ENCODE measurements at regions of chr19 and their contacts with region 1.

Region 1: GRCh38 chr19:860481-861101 is 1.1 kb downstream of the CFD start:
- DNase-seq: no peak
- ATAC-seq: peak; percentile 46
- H3K4me3 ChIP-seq: no peak overlapping the region
- H3K27ac ChIP-seq: no peak overlapping the region
- H3K4me1 ChIP-seq: peaks cover 10% of the 10 kb centered on the region
- H3K27me3 ChIP-seq: no peaks in the 10 kb centered on the region; a peak in 1 of 4 replicates
- CTCF ChIP-seq: peak in 2 of 3 experiments; percentile 6 to 10; a peak in 2 of 6 replicates
- EP300 ChIP-seq: no peak
- POLR2A ChIP-seq: peak; percentile 64; the same call in 1 of the 2 replicates
- RAD21 ChIP-seq: no peak

Region 2: GRCh38 chr19:771332-771785 is 89.2 kb before region 1 on chr19:
- CTCF ChIA-PET with region 1: interaction called, 14 read pairs
- POLR2A ChIA-PET with region 1: no interaction called
- RAD21 ChIA-PET with region 1: interaction called, 10 read pairs
- SMC1A ChIA-PET with region 1: interaction called, 6 read pairs
- in situ Hi-C with region 1: no loop called
- intact Hi-C with region 1: loop called (anchors 2 kb)
- DNase-seq: no peak
- ATAC-seq: peak; percentile 77
- H3K4me3 ChIP-seq: no peak overlapping the region
- H3K27ac ChIP-seq: no peak overlapping the region
- H3K4me1 ChIP-seq: no peaks in the 10 kb centered on the region
- H3K27me3 ChIP-seq: no peaks in the 10 kb centered on the region
- CTCF ChIP-seq: peak; percentile 39 to 57 (median 40); a peak in 5 of 6 replicates
- EP300 ChIP-seq: no peak
- POLR2A ChIP-seq: no peak
- RAD21 ChIP-seq: no peak

Region 3: GRCh38 chr19:804421-805165 is 56.0 kb before region 1 on chr19:
- CTCF ChIA-PET with region 1: no interaction called
- POLR2A ChIA-PET with region 1: no interaction called
- RAD21 ChIA-PET with region 1: no interaction called
- SMC1A ChIA-PET with region 1: no interaction called
- in situ Hi-C with region 1: no loop called
- intact Hi-C with region 1: no loop called
- DNase-seq: no peak
- ATAC-seq: no peak
- H3K4me3 ChIP-seq: no peak overlapping the region
- H3K27ac ChIP-seq: no peak overlapping the region
- H3K4me1 ChIP-seq: peaks cover 7% of the 10 kb centered on the region; the same call in 1 of the 2 replicates
- H3K27me3 ChIP-seq: no peaks in the 10 kb centered on the region
- CTCF ChIP-seq: no peak
- EP300 ChIP-seq: no peak
- POLR2A ChIP-seq: no peak; the same call in 1 of the 2 replicates
- RAD21 ChIP-seq: no peak

Region 4: DNA sequence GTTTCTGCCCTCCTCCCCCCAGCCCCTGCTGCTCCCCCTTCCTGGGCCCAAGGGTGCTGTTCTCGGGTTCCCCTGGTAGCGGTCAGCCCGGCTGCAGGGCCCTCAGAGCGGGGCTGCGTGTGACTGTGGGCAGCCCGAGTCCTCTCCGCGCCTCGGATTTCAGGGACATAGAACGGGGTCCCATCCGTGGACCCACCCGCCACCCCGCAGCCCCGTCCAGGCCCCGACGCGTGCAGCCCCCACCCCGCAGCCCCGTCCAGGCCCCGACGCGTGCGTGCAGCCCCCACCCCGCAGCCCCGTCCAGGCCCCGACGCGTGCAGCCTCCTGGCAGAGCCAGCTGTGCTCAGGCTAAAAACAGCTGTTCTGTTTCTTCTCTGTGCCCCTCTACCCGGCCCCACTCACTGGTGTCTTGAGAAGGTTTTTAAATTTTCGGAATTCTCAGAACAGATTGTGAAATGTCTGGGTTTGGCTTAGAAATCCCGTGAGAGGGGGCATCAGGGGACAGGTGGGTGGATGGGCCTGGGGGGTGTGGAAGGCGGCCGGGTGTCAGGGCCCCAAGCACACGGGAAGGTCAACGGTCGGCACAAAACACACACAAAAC is 25.3 kb before region 1 on chr19:
- CTCF ChIA-PET with region 1: no interaction called
- POLR2A ChIA-PET with region 1: no interaction called
- RAD21 ChIA-PET with region 1: no interaction called
- SMC1A ChIA-PET with region 1: no interaction called
- in situ Hi-C with region 1: no loop called
- intact Hi-C with region 1: no loop called
- DNase-seq: no peak
- ATAC-seq: no peak
- H3K4me3 ChIP-seq: no peak overlapping the region
- H3K27ac ChIP-seq: no peak overlapping the region
- H3K4me1 ChIP-seq: no peaks in the 10 kb centered on the region
- H3K27me3 ChIP-seq: no peaks in the 10 kb centered on the region
- CTCF ChIP-seq: no peak
- EP300 ChIP-seq: no peak
- POLR2A ChIP-seq: no peak
- RAD21 ChIP-seq: no peak

Region 5: GRCh38 chr19:907183-907853 is 46.7 kb after region 1 on chr19:
- CTCF ChIA-PET with region 1: interaction called, 40 read pairs
- POLR2A ChIA-PET with region 1: interaction called, 3 read pairs
- RAD21 ChIA-PET with region 1: interaction called, 30 read pairs
- SMC1A ChIA-PET with region 1: interaction called, 12 read pairs
- in situ Hi-C with region 1: no loop called
- intact Hi-C with region 1: no loop called
- DNase-seq: no peak
- ATAC-seq: peak; percentile 67
- H3K4me3 ChIP-seq: no peak overlapping the region
- H3K27ac ChIP-seq: peak overlapping the region; percentile 56; the same call in 1 of the 2 replicates
- H3K4me1 ChIP-seq: peaks cover 40% of the 10 kb centered on the region
- H3K27me3 ChIP-seq: no peaks in the 10 kb centered on the region
- CTCF ChIP-seq: no peak
- EP300 ChIP-seq: no peak
- POLR2A ChIP-seq: no peak
- RAD21 ChIP-seq: no peak

Region 6: DNA sequence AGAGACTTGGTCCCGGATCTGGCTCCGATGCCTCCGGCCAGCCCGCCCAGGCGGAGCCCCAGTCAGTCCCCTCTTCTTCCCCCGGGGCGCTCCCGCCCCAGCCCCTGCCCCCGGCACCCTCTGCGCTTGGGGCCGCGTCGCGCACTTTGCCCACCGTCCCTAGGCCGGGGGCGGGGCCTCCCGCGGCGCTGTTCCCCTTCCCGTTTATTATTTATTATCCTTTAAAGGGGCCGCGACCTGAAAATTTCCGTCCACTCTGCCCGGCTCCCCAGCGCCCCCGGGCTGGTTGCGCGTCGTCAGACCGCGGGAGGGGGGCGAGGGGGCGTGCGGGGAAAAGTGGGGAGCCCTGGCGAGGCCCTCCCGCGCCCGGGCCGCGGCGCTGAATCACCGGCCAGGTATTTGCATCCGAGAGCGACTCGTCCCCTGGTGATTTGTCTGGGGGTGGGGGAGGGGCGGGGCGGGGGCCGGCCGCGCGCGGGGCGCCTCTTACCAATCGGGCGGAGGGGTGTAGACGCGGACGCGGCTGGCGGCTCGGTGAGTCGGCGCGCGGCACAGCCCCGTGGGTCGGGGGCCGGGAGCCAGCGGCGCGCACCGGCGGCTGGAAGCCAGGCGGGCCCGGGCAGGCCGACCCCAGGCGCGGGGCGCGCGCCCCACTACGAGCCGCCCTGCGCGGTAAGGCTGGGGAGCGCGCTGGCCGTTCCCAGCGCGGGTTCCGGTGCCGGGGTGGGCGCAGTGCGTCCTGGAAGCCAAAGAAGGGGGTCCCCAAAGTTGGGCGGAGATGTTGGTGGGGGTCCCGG is 65.1 kb after region 1 on chr19 and contains the start of gene ARID3A:
- CTCF ChIA-PET with region 1: interaction called, 50 read pairs
- POLR2A ChIA-PET with region 1: interaction called, 5 read pairs
- RAD21 ChIA-PET with region 1: interaction called, 46 read pairs
- SMC1A ChIA-PET with region 1: interaction called, 12 read pairs
- in situ Hi-C with region 1: loop called (anchors 5 kb)
- intact Hi-C with region 1: loop called (anchors 1 kb)
- DNase-seq: no peak
- ATAC-seq: peak; percentile 27
- H3K4me3 ChIP-seq: peak within 1 kb of the TSS; percentile 99
- H3K27ac ChIP-seq: peak within 1 kb of the TSS; percentile 96
- H3K4me1 ChIP-seq: peaks cover 18% of the 10 kb centered on the region
- H3K27me3 ChIP-seq: no peaks in the 10 kb centered on the region
- CTCF ChIP-seq: no peak
- EP300 ChIP-seq: no peak
- POLR2A ChIP-seq: peak; percentile 80
- RAD21 ChIP-seq: no peak; the same call in 1 of the 2 replicates
- polyA plus RNA-seq, gene ARID3A: 0.76 to 1.6 TPM

Region 7: GRCh38 chr19:989381-990119 is 129.0 kb after region 1 on chr19:
- CTCF ChIA-PET with region 1: interaction called, 30 read pairs
- POLR2A ChIA-PET with region 1: no interaction called
- RAD21 ChIA-PET with region 1: interaction called, 10 read pairs
- SMC1A ChIA-PET with region 1: interaction called, 15 read pairs
- in situ Hi-C with region 1: loop called (anchors 5 kb)
- intact Hi-C with region 1: loop called (anchors 2 kb)
- DNase-seq: no peak
- ATAC-seq: no peak
- H3K4me3 ChIP-seq: no peak overlapping the region
- H3K27ac ChIP-seq: no peak overlapping the region
- H3K4me1 ChIP-seq: 0 out of 2 replicates have a peak, but pooled peaks cover 3% of the 10 kb centered on the region
- H3K27me3 ChIP-seq: no peaks in the 10 kb centered on the region
- CTCF ChIP-seq: 0 out of 6 replicates have a peak, but pooled peaks have one; percentile 12 to 28 (median 13)
- EP300 ChIP-seq: no peak
- POLR2A ChIP-seq: peak; percentile 27; the same call in 1 of the 2 replicates
- RAD21 ChIP-seq: no peak

Measured in GM12878 (cell line).